CD4-positive, alpha-beta memory T cell (primary cell): ENCODE measurements at regions of chr9 and their contacts with region 1.

Region 1: DNA sequence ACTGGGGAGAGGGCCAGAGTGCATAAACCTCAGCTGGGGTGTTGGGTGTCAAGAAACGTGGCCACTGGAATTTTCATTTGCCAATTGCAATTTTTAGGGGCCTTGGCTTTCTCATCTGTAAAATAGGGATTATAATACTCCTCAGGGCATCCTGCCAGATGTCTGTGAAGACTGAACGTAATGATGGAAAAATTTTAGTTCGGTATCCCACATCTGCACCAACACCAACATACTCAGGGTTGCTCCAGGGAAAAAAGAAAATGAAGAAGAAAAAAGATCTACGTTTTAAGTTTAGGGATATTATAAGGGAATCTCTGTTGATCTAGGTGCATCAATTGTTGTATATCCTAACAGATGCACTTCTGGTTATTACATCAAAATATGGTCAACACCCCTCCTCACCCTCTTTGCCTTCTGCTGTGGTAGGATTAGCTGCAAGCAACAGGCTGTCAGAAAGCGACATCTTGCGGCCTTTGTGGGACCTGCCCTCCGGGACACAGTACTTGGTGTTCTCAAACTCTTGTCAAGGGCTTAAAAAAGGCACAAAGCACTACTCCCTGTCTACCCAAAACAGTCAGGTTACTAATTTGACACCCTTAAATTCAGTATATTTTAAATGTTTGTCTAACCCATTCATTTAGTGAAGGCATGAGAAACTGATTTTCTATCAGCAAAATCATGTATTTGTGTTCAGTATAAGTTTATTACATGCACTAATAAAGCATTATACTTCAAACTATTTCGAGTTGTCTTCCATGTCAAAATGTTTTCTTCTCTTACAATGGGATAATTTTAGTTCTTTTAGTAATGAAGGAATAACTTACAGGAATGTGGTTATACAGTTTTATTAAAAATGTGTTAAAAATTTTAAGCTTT is 8.3 kb upstream of the TBC1D2 start:
- DNase-seq: peak; percentile 78 to 84 (median 80)
- H3K4me3 ChIP-seq: no peak overlapping the region
- H3K4me3 Mint-ChIP-seq: no peak overlapping the region
- H3K27ac ChIP-seq: no peak overlapping the region
- H3K27ac Mint-ChIP-seq: peak overlapping the region in 2 of 7 donors; percentile 31 to 63
- H3K4me1 ChIP-seq: no peaks in the 10 kb centered on the region
- H3K4me1 Mint-ChIP-seq: peaks cover 0 to 5% (median 3%) of the 10 kb centered on the region in 4 donors
- H3K27me3 ChIP-seq: no peaks in the 10 kb centered on the region
- H3K27me3 Mint-ChIP-seq: peaks cover 0 to 6% of the 10 kb centered on the region in 2 donors

Region 2: GRCh38 chr9:97890038-97890437 is 373.7 kb before region 1 on chr9:
- CTCF ChIA-PET with region 1: interaction called, 3 read pairs
- POLR2A ChIA-PET with region 1: no interaction called
- intact Hi-C with region 1: loop called (anchors 1 kb)
- DNase-seq: peak; percentile 52 to 61 (median 56)
- H3K4me3 ChIP-seq: no peak overlapping the region
- H3K4me3 Mint-ChIP-seq: no peak overlapping the region
- H3K27ac ChIP-seq: no peak overlapping the region
- H3K27ac Mint-ChIP-seq: peak overlapping the region in 3 of 7 donors; percentile 32 to 63 (median 58)
- H3K4me1 ChIP-seq: peaks cover 9% of the 10 kb centered on the region
- H3K4me1 Mint-ChIP-seq: peaks cover 2 to 13% (median 5%) of the 10 kb centered on the region in 4 donors
- H3K27me3 ChIP-seq: no peaks in the 10 kb centered on the region
- H3K27me3 Mint-ChIP-seq: no peaks in the 10 kb centered on the region

Region 3: GRCh38 chr9:97966493-97966892 is 297.2 kb before region 1 on chr9:
- CTCF ChIA-PET with region 1: no interaction called
- POLR2A ChIA-PET with region 1: no interaction called
- intact Hi-C with region 1: no loop called
- DNase-seq: no peak
- H3K4me3 ChIP-seq: no peak overlapping the region
- H3K4me3 Mint-ChIP-seq: no peak overlapping the region
- H3K27ac ChIP-seq: no peak overlapping the region
- H3K27ac Mint-ChIP-seq: no peak overlapping the region
- H3K4me1 ChIP-seq: no peaks in the 10 kb centered on the region
- H3K4me1 Mint-ChIP-seq: no peaks in the 10 kb centered on the region
- H3K27me3 ChIP-seq: no peaks in the 10 kb centered on the region
- H3K27me3 Mint-ChIP-seq: peaks cover 7% of the 10 kb centered on the region in 2 donors

Region 4: DNA sequence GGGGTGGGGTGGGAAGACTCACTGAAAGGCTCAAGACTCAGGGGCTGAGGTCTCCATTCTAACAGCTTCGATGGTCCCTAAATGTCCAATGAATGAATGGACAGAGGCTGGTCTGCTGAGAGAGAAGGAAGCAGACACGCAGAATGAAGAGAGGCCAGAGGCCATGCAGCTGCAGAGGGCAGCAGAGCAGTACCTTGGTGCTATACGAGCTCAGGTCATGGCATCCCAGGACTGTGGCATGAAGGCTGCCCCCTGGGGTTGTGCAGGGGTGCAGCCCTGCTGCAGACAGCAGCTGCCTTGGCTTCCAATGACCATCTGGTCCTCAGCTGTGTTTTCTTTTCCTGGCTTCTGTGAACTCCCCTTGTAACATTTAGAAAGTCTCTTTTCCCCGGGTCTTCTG is 56.1 kb before region 1 on chr9:
- CTCF ChIA-PET with region 1: interaction called, 48 read pairs
- POLR2A ChIA-PET with region 1: interaction called, 3 read pairs
- intact Hi-C with region 1: loop called (anchors 1 kb)
- DNase-seq: no peak
- H3K4me3 ChIP-seq: no peak overlapping the region
- H3K4me3 Mint-ChIP-seq: no peak overlapping the region
- H3K27ac ChIP-seq: no peak overlapping the region
- H3K27ac Mint-ChIP-seq: peak overlapping the region in 3 of 7 donors; percentile 24 to 49 (median 36)
- H3K4me1 ChIP-seq: peaks cover 8% of the 10 kb centered on the region
- H3K4me1 Mint-ChIP-seq: peaks cover 0 to 11% (median 6%) of the 10 kb centered on the region in 4 donors
- H3K27me3 ChIP-seq: no peaks in the 10 kb centered on the region
- H3K27me3 Mint-ChIP-seq: no peaks in the 10 kb centered on the region

Region 5: DNA sequence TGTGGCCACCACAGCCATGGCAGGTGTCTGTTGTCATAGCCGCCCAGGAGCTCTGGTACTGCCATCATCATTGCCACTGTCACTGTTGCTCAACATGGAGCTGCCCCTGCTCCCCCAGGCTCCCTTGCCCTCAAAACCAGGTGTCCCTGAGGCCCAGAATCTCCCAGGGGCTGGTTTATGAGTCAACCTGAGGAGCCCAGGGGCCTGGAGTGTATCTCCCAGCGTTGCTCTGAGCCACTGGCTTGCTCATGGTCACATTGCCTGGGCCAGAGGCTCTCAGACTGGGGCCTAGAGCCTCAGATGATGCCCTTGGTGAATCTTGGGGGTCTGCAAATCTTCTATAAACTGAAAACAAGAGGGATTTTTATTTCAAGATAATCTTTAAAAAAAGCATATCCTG is 16.4 kb after region 1 on chr9:
- CTCF ChIA-PET with region 1: no interaction called
- POLR2A ChIA-PET with region 1: no interaction called
- intact Hi-C with region 1: no loop called
- DNase-seq: no peak
- H3K4me3 ChIP-seq: no peak overlapping the region
- H3K4me3 Mint-ChIP-seq: no peak overlapping the region
- H3K27ac ChIP-seq: no peak overlapping the region
- H3K27ac Mint-ChIP-seq: no peak overlapping the region
- H3K4me1 ChIP-seq: no peaks in the 10 kb centered on the region
- H3K4me1 Mint-ChIP-seq: no peaks in the 10 kb centered on the region
- H3K27me3 ChIP-seq: no peaks in the 10 kb centered on the region
- H3K27me3 Mint-ChIP-seq: peaks cover 11 to 15% of the 10 kb centered on the region in 2 donors

Region 6: GRCh38 chr9:98315551-98316060 is 51.9 kb after region 1 on chr9:
- CTCF ChIA-PET with region 1: no interaction called
- POLR2A ChIA-PET with region 1: no interaction called
- intact Hi-C with region 1: no loop called
- DNase-seq: peak; percentile 57 to 66 (median 61)
- H3K4me3 ChIP-seq: no peak overlapping the region
- H3K4me3 Mint-ChIP-seq: no peak overlapping the region
- H3K27ac ChIP-seq: no peak overlapping the region
- H3K27ac Mint-ChIP-seq: no peak overlapping the region
- H3K4me1 ChIP-seq: no peaks in the 10 kb centered on the region
- H3K4me1 Mint-ChIP-seq: peaks cover 0 to 6% (median 3%) of the 10 kb centered on the region in 4 donors
- H3K27me3 ChIP-seq: no peaks in the 10 kb centered on the region
- H3K27me3 Mint-ChIP-seq: peaks cover 4% of the 10 kb centered on the region in 2 donors